Endothelial cell of umbilical vein (primary cell): ENCODE measurements at regions of chr18 and their contacts with region 1.

Region 1: DNA sequence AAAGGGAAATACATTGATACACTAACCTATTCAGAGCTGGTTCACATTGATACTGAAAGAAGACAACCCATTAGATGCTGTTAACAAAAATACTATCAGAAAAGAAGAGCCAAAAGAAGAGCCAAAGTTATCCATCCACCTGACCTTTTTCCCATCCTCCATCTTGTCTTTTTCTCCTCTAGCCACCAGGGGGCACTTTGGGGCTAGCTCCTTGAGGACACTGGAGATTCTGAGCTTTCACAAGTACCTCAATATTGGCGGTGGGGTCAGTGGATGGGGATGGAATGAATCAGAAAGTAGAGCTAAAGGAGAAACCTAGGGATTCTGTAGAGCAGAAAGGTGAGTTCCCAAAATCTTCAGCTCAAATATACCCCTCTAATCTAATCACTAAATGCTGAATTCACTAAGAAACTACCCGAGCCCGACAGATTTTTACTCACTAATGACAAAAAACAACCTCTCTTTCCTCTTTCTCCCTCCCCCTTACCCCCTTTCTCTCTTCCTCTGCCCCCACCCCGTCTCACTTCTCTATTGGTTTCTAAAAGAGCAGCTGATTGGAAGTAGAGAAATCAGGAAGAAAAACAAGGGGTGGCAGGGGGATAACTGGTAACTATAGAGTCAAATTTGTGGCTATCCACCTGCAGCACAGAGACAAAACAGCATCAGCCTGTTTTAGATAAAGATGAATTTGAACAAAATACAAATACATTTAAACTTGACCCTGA is 203.3 kb downstream of the TCF4 start:
- DNase-seq: peak; percentile 67
- H3K4me3 ChIP-seq: no peak overlapping the region
- H3K27ac ChIP-seq: no peak overlapping the region
- H3K4me1 ChIP-seq: peaks cover 39% of the 10 kb centered on the region
- H3K27me3 ChIP-seq: no peaks in the 10 kb centered on the region
- CTCF ChIP-seq: peak; percentile 69 to 74
- POLR2A ChIP-seq: no peak

Region 2: DNA sequence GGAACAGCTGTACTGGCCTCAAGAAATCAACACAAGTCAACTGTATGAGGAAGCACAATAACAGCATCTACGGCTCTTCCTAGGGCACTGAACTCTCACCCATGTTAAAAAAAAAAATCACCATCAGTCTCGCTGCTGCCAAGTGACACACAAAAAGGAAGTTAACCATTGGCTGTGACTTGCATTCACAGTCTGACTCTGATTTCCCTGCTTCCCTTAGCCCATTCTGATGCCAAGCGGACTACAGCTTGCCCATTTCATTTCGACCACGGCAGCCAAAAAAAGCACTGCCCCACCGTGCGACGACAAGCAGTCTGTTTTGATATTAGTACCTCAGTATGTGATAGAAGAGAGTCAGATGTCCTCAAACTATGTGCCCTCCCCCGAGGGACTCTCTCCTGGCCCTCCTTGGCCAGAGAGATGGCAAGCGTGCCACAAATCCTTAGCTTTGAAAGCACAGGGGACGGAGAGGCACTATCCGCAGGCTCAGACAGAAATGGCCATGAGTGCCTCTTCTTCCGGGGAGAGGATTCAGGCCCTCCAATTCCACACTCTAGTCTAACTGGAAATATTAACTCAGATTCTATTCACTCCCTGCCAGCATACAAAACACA is 46.7 kb before region 1 on chr18:
- CTCF ChIA-PET with region 1: interaction called, 5 read pairs
- POLR2A ChIA-PET with region 1: no interaction called
- dilution Hi-C with region 1: no loop called
- intact Hi-C with region 1: loop called (anchors 1 kb)
- DNase-seq: peak; percentile 92
- H3K4me3 ChIP-seq: no peak overlapping the region
- H3K27ac ChIP-seq: peak overlapping the region; percentile 83
- H3K4me1 ChIP-seq: peaks cover 45% of the 10 kb centered on the region
- H3K27me3 ChIP-seq: no peaks in the 10 kb centered on the region
- CTCF ChIP-seq: no peak
- POLR2A ChIP-seq: no peak

Region 3: DNA sequence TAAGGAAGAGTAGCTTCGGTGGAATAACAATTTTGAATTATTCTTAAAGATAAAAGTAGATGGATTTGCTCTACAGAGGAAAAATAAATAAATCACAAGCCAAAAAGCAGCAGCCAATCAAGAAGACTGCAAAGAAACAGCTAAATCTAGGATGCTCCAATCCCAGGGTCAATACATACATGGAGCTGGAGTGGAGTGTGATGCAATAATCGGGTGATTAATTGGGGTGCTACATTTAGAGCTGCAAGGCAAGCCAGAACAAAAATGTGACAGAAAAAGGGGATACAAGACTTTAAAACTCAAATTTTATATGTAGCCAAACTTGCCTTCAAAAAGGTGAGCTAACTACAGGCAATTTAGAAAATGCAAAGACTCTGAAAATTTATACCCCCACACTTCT is 12.5 kb before region 1 on chr18:
- CTCF ChIA-PET with region 1: interaction called, 11 read pairs
- POLR2A ChIA-PET with region 1: no interaction called
- dilution Hi-C with region 1: no loop called
- intact Hi-C with region 1: no loop called
- DNase-seq: no peak
- H3K4me3 ChIP-seq: no peak overlapping the region
- H3K27ac ChIP-seq: no peak overlapping the region
- H3K4me1 ChIP-seq: peaks cover under 1% of the 10 kb centered on the region
- H3K27me3 ChIP-seq: no peaks in the 10 kb centered on the region
- CTCF ChIP-seq: no peak
- POLR2A ChIP-seq: no peak

Region 4: DNA sequence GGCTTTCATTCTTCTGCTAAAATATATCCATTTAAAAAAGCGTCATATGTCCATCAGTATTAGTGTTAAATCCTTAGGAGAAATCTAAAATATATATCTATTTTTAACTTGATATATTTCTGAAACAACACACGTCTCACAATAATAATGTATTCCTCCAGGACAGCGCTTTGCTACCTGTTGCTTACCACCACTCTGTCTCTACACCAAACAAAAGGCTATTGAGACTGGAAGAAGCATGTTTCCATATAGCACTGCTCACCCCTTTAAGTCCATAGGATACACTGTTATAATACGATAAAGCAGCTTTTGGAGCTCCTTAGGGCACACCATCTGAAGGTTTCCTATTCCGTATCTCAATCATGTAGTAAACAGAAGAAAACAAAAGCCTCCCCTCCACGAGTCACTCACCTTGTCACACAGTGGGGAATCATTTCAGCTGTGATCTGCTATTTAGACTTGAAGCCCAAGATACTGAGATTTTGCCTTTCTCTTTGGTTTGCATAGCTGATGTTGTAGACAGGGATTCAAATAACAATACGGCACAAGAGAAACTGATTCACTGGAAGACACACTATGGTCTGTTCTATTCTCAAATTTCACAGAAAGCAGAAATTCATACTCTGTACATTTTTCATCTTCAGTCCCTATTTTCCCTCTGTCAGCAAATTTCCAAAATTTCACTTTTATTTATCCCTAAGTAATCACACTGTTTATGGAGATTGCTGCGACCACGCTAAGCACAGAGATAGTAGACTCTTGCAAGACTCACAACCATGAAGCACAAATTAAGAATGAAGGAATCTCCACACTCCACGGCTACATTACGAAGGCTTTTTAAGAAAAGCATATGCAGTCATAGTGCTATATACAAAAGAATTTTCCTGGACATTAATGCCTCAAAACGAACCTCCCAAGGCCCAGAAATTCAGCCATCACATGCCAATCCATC is 16.2 kb after region 1 on chr18:
- CTCF ChIA-PET with region 1: interaction called, 15 read pairs
- POLR2A ChIA-PET with region 1: interaction called, 11 read pairs
- dilution Hi-C with region 1: no loop called
- intact Hi-C with region 1: loop called (anchors 1 kb)
- DNase-seq: peak; percentile 65
- H3K4me3 ChIP-seq: peak overlapping the region; percentile 78 to 98 (median 79)
- H3K27ac ChIP-seq: peak overlapping the region; percentile 96
- H3K4me1 ChIP-seq: peaks cover 67% of the 10 kb centered on the region
- H3K27me3 ChIP-seq: no peaks in the 10 kb centered on the region
- CTCF ChIP-seq: no peak
- POLR2A ChIP-seq: no peak

Region 5: GRCh38 chr18:55415258-55415871 is 30.7 kb after region 1 on chr18:
- CTCF ChIA-PET with region 1: interaction called, 15 read pairs
- POLR2A ChIA-PET with region 1: no interaction called
- dilution Hi-C with region 1: no loop called
- intact Hi-C with region 1: no loop called
- DNase-seq: peak; percentile 90
- H3K4me3 ChIP-seq: no peak overlapping the region
- H3K27ac ChIP-seq: peak overlapping the region; percentile 13
- H3K4me1 ChIP-seq: peaks cover 45% of the 10 kb centered on the region
- H3K27me3 ChIP-seq: no peaks in the 10 kb centered on the region
- CTCF ChIP-seq: peak; percentile 79 to 91
- POLR2A ChIP-seq: no peak

Region 6: GRCh38 chr18:55861266-55861665 is 476.6 kb after region 1 on chr18:
- CTCF ChIA-PET with region 1: interaction called, 13 read pairs
- POLR2A ChIA-PET with region 1: no interaction called
- dilution Hi-C with region 1: no loop called
- intact Hi-C with region 1: loop called (anchors 1 kb)
- DNase-seq: peak; percentile 65
- H3K4me3 ChIP-seq: no peak overlapping the region
- H3K27ac ChIP-seq: no peak overlapping the region
- H3K4me1 ChIP-seq: peaks cover 5% of the 10 kb centered on the region
- H3K27me3 ChIP-seq: no peaks in the 10 kb centered on the region
- CTCF ChIP-seq: peak; percentile 41 to 44
- POLR2A ChIP-seq: no peak

Region 7: DNA sequence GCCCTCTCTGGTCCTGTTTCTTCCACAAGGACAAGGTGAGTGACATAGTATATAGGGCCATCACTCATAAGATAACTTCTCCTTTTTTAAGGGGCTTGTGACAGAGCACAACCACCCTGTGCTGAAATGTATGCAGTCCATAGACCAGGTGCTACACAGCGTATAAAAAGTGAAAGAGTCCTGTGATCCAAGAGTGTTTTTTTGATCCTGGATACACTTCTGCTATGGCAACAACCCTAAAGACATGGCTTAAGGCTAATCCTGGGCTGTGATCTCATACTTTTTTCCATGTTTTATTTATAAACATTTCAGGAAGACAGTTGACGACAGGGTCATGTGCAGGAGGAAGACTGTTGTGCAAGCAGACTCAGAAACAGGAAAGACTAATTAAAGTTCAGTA is 603.8 kb after region 1 on chr18:
- CTCF ChIA-PET with region 1: no interaction called
- POLR2A ChIA-PET with region 1: no interaction called
- dilution Hi-C with region 1: no loop called
- intact Hi-C with region 1: loop called (anchors 10 kb)
- DNase-seq: peak; percentile 94
- H3K4me3 ChIP-seq: no peak overlapping the region
- H3K27ac ChIP-seq: peak overlapping the region; percentile 81
- H3K4me1 ChIP-seq: peaks cover 10% of the 10 kb centered on the region
- H3K27me3 ChIP-seq: no peaks in the 10 kb centered on the region
- CTCF ChIP-seq: no peak
- POLR2A ChIP-seq: no peak